Naive thymus-derived CD4-positive, alpha-beta T cell (primary cell): ENCODE measurements at regions of chr1 and their contacts with region 1.

Region 1: DNA sequence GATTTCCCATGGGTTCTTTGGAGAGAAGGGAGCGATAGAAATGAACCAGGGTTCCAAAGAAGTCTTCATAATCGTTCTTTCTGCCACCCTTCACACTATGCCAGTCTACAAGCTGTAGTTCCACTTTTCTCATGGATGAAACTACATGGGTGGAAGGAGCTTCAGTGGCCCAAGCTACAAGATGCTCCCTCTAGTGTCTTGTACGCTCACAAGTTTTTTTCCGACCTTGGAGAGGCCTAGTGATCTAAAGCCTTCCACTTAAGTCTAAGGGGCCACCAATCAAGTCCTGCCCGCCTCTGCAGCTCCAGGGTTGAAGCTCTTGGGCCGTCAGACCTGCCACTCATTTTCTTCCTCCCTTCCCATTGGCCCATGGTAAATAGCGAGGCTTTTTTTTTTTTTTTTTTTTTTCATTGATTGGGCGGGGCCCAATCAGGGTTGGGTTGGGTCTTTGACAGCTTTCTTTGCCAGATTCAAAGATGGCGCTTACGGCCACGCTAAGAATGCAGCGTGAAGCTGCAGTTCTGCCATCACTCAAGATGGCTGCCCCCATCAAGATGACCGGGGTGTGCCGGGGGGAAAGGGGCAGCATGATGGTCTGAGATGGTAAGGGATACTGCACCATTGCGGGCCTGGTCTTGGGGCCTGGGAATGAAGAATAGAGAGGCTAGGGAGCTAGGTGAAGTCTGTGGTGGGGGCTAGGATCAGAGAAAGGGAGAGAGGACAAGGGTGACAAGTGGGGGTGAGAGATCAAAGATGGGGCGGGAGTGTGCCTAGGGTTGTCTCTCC is at the start of gene TOMM40L:
- DNase-seq: peak; percentile 66 to 96 (median 92)
- ATAC-seq: peak; percentile 95
- H3K4me3 ChIP-seq: peak within 1 kb of the TSS; percentile 73
- H3K4me3 Mint-ChIP-seq: peak within 1 kb of the TSS; percentile 89 to 100 (median 98)
- H3K27ac ChIP-seq: peak within 1 kb of the TSS; percentile 70
- H3K27ac Mint-ChIP-seq: peak within 1 kb of the TSS; percentile 69 to 99 (median 97)
- H3K4me1 ChIP-seq: peaks cover 8 to 24% of the 10 kb centered on the region in 2 donors
- H3K4me1 Mint-ChIP-seq: peaks cover 19 to 58% (median 43%) of the 10 kb centered on the region in 7 donors
- H3K27me3 ChIP-seq: no peaks in the 10 kb centered on the region
- H3K27me3 Mint-ChIP-seq: no peaks in the 10 kb centered on the region
- total RNA-seq, gene TOMM40L: 8.9 to 24.3 (median 11.8) TPM

Region 2: GRCh38 chr1:161033751-161034150 is 192.0 kb before region 1 on chr1:
- CTCF ChIA-PET with region 1: no interaction called
- POLR2A ChIA-PET with region 1: no interaction called
- intact Hi-C with region 1: no loop called
- DNase-seq: no peak
- ATAC-seq: no peak
- H3K4me3 ChIP-seq: no peak overlapping the region
- H3K4me3 Mint-ChIP-seq: no peak overlapping the region
- H3K27ac ChIP-seq: no peak overlapping the region
- H3K27ac Mint-ChIP-seq: no peak overlapping the region
- H3K4me1 ChIP-seq: peaks cover 9 to 11% of the 10 kb centered on the region in 2 donors
- H3K4me1 Mint-ChIP-seq: peaks cover 10 to 29% (median 27%) of the 10 kb centered on the region in 7 donors
- H3K27me3 ChIP-seq: no peaks in the 10 kb centered on the region
- H3K27me3 Mint-ChIP-seq: no peaks in the 10 kb centered on the region

Region 3: DNA sequence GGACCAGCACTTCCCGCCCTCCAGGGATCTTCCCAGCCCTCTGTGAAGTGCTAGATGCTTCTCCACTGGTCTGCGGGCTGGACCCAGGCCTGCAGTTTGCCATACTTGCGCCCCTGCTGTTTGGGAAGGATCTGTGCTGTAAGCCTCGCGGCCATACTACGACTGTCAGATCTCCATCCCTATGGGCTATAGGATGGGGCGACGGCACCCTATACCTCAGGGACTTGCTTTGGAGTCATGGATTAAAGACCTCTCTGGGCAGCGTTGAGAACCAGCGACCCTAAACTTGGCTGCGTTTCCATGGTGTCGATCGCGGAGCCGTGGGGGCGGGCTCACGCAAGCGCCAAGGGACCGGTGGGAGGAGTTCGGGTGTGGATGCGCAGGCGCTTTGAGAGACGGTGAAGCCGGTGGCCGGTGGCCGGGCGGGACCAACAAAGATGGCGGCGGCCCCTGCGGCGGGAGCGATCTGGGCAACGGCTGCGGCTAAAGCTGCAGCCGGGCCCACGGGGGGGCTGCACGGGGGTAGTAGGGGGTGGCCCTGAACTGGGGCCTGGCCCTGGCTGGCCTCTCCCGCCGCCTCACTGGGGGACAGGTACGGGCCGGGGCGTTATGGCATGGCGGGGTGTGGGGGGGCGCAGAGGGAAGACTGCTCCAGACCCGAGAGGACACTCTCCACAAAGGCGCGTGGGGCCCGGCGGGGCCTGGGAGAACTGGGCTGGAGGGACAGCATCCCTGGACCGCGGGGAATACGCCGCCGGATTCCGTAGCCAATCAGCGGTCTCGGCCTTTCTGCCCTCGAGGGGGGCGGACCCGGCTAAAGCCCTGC is 66.4 kb before region 1 on chr1 and contains the start of gene USP21:
- CTCF ChIA-PET with region 1: interaction called, 25 read pairs
- POLR2A ChIA-PET with region 1: interaction called, 16 read pairs
- intact Hi-C with region 1: loop called in 1 of 2 experiments (anchors 1 kb)
- DNase-seq: peak; percentile 86 to 93 (median 91)
- ATAC-seq: peak; percentile 95
- H3K4me3 ChIP-seq: peak within 1 kb of the TSS; percentile 68
- H3K4me3 Mint-ChIP-seq: peak within 1 kb of the TSS; percentile 88 to 94 (median 92)
- H3K27ac ChIP-seq: peak within 1 kb of the TSS; percentile 84
- H3K27ac Mint-ChIP-seq: peak within 1 kb of the TSS; percentile 89 to 97 (median 93)
- H3K4me1 ChIP-seq: peaks cover 31 to 34% of the 10 kb centered on the region in 2 donors
- H3K4me1 Mint-ChIP-seq: peaks cover 35 to 76% (median 67%) of the 10 kb centered on the region in 7 donors
- H3K27me3 ChIP-seq: no peaks in the 10 kb centered on the region
- H3K27me3 Mint-ChIP-seq: no peaks in the 10 kb centered on the region
- total RNA-seq, gene USP21: 36.0 to 66.0 (median 38.6) TPM

Region 4: DNA sequence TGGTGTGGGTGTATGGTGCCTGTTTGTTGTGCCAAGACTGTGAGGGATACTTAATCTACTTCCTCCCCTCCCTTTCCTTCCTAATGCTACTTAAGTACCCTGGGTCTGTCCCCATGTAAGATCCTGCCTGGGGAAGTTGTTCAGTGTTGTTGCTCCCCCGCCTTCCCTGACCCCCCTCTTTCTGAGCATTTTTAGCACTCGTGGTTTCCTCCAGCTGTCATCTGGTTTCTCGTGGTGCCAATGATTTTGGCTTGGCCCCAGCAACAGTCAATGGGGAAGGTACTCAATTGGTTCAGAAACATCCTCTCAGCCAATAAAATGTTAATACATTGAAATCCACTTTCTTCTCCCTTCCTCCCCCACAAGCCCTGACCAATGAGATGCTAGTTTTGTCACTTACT is 40.4 kb before region 1 on chr1:
- CTCF ChIA-PET with region 1: interaction called, 37 read pairs
- POLR2A ChIA-PET with region 1: interaction called, 508 read pairs
- intact Hi-C with region 1: loop called in 1 of 2 experiments (anchors 1 kb)
- DNase-seq: peak; percentile 38 to 92 (median 87)
- ATAC-seq: peak; percentile 88
- H3K4me3 ChIP-seq: peak overlapping the region; percentile 24
- H3K4me3 Mint-ChIP-seq: peak overlapping the region; percentile 76 to 89 (median 84)
- H3K27ac ChIP-seq: peak overlapping the region; percentile 65
- H3K27ac Mint-ChIP-seq: peak overlapping the region; percentile 92 to 99 (median 97)
- H3K4me1 ChIP-seq: peaks cover 74 to 79% of the 10 kb centered on the region in 2 donors
- H3K4me1 Mint-ChIP-seq: peaks cover 65 to 90% (median 80%) of the 10 kb centered on the region in 7 donors
- H3K27me3 ChIP-seq: no peaks in the 10 kb centered on the region
- H3K27me3 Mint-ChIP-seq: no peaks in the 10 kb centered on the region

Region 5: DNA sequence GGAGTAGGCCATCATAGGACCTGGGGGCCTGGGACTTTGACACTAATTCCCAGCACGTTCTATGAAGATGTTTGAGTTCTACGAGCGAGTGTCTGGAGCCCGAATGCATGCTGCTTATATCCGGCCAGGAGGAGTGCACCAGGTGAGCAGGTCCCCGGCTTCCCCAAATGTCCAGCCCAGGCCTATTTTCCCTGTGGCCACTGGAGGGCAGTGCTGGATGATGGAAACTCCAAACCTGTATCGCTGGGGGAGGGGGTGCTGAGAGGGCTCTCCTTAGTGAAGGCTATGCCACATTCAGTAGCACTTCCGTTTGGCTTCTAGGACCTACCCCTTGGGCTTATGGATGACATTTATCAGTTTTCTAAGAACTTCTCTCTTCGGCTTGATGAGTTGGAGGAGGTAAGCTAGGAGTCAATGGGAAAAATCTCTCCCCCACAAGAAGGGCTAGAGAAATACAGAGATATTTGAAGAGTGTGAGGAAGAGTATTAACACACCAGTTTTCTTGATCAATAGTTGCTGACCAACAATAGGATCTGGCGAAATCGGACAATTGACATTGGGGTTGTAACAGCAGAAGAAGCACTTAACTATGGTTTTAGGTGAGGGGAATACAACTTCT is 15.8 kb before region 1 on chr1:
- CTCF ChIA-PET with region 1: interaction called, 74 read pairs
- POLR2A ChIA-PET with region 1: interaction called, 508 read pairs
- intact Hi-C with region 1: loop called (anchors 1 kb)
- DNase-seq: peak; percentile 53 to 79 (median 73)
- ATAC-seq: peak; percentile 98
- H3K4me3 ChIP-seq: no peak overlapping the region
- H3K4me3 Mint-ChIP-seq: no peak overlapping the region
- H3K27ac ChIP-seq: peak overlapping the region; percentile 27
- H3K27ac Mint-ChIP-seq: peak overlapping the region in 8 of 9 donors; percentile 60 to 89 (median 66)
- H3K4me1 ChIP-seq: peaks cover 0 to 31% of the 10 kb centered on the region in 2 donors
- H3K4me1 Mint-ChIP-seq: peaks cover 12 to 49% (median 41%) of the 10 kb centered on the region in 7 donors
- H3K27me3 ChIP-seq: no peaks in the 10 kb centered on the region
- H3K27me3 Mint-ChIP-seq: no peaks in the 10 kb centered on the region

Region 6: DNA sequence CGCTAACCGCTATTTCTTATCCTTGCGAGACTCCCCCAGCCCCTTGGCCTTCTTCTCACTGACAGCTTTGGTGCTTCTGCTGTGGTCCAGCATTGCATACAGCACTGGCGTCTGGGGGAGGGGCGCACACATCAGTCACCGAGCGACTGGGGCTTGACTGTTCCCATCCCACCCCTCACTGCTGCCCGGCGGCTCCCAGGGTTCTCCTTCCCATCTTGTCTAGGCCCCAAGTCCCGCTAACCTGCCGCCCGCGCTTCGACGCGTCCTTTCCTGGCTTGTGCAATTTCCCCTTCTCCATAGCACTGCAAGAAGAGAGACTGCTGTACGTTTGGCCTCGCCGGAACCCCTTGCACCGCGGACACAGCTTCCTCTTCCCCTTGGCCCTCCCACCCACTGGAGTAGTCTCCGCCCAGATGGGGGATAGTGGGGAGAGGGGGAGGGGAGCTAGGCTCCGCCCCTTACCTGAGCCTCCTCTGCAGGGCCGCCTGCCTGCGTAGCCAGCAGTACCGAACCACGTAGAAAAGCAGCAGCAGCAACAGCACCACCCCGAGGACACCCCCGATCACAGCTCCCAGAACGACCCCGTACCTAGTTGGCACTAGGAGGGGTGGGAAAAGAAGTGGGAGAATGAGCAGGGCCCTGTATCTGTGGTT is 80.3 kb after region 1 on chr1:
- CTCF ChIA-PET with region 1: interaction called, 5 read pairs
- POLR2A ChIA-PET with region 1: interaction called, 9 read pairs
- intact Hi-C with region 1: loop called (anchors 1 kb)
- DNase-seq: peak; percentile 67 to 94 (median 92)
- ATAC-seq: peak; percentile 99
- H3K4me3 ChIP-seq: peak overlapping the region; percentile 86
- H3K4me3 Mint-ChIP-seq: peak overlapping the region; percentile 93 to 100 (median 98)
- H3K27ac ChIP-seq: peak overlapping the region; percentile 78
- H3K27ac Mint-ChIP-seq: peak overlapping the region; percentile 91 to 98 (median 95)
- H3K4me1 ChIP-seq: peaks cover 16 to 19% of the 10 kb centered on the region in 2 donors
- H3K4me1 Mint-ChIP-seq: peaks cover 27 to 47% (median 41%) of the 10 kb centered on the region in 7 donors
- H3K27me3 ChIP-seq: no peaks in the 10 kb centered on the region
- H3K27me3 Mint-ChIP-seq: peaks cover 0 to 5% (median 0%) of the 10 kb centered on the region in 5 donors

Region 7: DNA sequence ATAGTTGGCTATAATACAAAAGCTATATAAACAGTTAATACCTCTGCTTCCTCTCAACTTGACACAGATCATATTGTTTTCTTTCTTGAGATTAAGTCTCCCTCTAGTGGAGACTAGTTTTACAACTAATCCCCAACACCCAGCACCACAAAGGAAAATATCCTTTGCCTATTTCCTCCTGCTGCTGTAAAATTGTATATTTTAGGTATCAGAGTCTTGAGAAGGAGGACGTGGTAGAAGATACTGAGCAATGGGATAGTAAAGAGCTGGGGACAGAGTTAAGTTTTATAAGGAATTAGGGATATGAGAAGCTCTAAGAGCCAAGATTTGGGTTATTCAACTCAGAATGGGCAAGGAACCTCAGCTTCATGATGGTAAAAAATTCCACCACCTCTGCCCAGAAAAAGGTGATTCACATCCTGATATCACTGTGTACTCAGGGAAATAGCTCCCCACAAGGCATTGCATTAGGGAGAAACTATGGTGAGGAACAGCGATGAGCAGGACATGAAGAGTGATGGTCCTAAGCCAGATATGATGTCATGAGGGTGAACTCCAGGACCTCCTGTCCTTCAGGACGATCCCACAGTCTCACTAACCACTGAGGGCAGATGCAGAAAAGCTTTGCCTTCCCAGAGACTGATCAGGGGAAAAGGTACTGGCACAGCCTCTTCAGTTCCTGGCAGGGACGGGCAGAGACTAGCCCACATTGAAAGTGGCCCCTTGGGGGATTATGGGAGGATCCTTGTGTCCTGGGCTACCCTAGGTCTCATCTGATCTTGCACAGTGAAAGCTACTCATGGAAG is 156.7 kb after region 1 on chr1:
- CTCF ChIA-PET with region 1: interaction called, 91 read pairs
- POLR2A ChIA-PET with region 1: interaction called, 7 read pairs
- intact Hi-C with region 1: loop called (anchors 1 kb)
- DNase-seq: peak in 6 of 9 donors; percentile 40 to 68 (median 59)
- ATAC-seq: peak; percentile 91
- H3K4me3 ChIP-seq: no peak overlapping the region
- H3K4me3 Mint-ChIP-seq: no peak overlapping the region
- H3K27ac ChIP-seq: no peak overlapping the region
- H3K27ac Mint-ChIP-seq: peak overlapping the region in 3 of 9 donors; percentile 53 to 76 (median 73)
- H3K4me1 ChIP-seq: peaks cover 0 to 3% of the 10 kb centered on the region in 2 donors
- H3K4me1 Mint-ChIP-seq: peaks cover 0 to 19% (median 13%) of the 10 kb centered on the region in 7 donors
- H3K27me3 ChIP-seq: no peaks in the 10 kb centered on the region
- H3K27me3 Mint-ChIP-seq: no peaks in the 10 kb centered on the region